ENCODE measurements at regions of chr19 and their contacts with region 1.

Region 1: GRCh38 chr19:40055832-40056504 is at the start of gene ZNF780B:
- DNase-seq: peak; percentile 89
- total RNA-seq, gene ZNF780B: 23.9 TPM

Region 2: DNA sequence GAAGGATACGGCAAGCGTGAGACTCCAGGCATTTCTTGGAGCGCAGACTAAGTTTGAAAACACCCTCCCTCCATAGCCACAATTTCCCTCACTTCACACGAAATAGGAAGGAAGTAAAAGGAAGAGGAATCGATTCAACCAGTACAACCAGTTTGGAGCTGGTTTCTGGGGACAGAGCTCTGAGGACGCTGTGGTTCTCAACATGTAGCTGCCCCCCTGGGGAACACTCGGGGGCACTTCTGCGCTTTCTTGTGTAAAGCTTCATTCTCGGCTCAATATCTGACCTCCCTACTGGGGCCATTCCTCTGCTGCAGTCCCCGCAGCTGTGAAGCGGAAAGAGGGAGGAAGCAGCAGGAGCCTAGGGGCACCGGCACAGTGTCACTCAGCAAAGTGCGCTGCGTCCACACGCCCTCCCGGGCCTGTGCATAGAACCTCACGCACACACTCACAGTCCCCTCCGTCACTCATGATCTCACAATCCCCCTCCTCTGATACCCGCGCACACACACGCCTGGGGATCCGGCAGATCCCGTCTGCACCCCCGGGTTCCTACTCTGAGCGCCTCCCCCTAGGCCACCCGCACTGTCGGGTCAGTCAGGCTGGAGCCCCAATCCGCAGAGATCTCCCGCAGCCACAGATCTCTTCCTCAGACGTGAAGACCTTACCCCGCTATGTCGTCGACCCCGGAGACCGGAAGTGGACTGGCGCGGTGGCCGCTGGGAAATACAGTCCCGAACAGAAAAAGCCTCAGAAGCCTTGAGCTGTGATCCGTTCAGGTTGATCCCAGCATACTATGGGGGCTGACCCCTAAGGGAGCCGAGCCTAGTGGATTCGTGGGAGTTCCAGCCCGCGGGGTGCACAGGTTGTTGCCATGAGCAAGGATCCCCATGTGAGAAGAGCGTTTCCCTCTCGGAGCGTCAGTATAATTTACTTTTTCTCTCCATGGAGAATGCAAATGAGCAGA is 34.6 kb after region 1 on chr19 and contains the start of gene ZNF780A:
- intact Hi-C with region 1: loop called (anchors 2 kb)
- DNase-seq: peak; percentile 92
- total RNA-seq, gene ZNF780A: 11.2 TPM